Activated CD4-positive, alpha-beta T cell treated with anti-CD3 and anti-CD28 coated beads for 36 hours (primary cell): ENCODE measurements at regions of chr1 and their contacts with region 1.

Region 1: DNA sequence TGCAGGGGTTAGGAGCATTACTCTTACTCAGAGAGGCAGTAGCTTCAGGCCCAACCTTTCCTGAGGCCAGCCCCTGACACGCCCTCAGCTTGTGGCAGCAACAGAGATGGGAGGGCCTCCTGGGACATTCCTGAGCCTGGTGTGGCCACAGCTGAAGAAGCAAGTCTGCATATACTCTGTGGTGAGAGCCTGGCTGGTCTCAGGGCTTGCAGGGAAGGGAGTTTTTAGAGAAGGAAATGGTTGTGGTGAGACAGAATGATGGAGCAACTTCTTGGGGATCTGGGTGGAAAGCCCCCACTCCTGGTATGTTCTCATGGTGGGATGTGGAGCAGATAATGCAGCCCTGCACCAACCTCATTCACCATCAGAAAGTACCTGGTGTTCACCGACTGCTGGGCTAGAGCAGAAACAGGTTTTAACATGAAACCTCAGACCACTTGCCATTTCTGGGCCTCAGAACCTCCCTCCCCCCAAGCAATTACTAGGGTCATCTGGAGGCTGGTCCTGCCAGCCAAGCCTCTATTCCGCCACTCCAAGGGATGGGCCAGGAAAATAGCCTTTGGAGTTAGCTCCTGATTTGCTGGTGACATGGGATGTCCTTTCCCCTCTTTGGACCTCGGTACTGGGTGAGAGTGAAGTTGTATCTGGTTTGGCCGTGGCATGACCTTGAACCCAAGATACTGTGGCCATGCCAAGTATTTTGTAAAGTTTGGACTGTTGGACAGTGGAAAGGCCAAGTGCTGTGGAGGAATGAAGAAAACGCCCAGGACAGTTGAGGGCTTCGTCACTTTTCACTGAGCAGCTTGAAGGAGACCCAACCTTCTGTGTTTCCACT is 28.1 kb upstream of the RNF19B start:
- DNase-seq: peak; percentile 87
- ATAC-seq: peak; percentile 88
- H3K4me3 Mint-ChIP-seq: no peak overlapping the region
- H3K27ac Mint-ChIP-seq: peak overlapping the region; percentile 79
- H3K4me1 Mint-ChIP-seq: peaks cover 43% of the 10 kb centered on the region
- H3K27me3 Mint-ChIP-seq: no peaks in the 10 kb centered on the region

Region 2: GRCh38 chr1:31541194-31541593 is 1451.5 kb before region 1 on chr1:
- CTCF ChIA-PET with region 1: no interaction called
- POLR2A ChIA-PET with region 1: no interaction called
- intact Hi-C with region 1: no loop called
- DNase-seq: no peak
- ATAC-seq: no peak
- H3K4me3 Mint-ChIP-seq: no peak overlapping the region
- H3K27ac Mint-ChIP-seq: no peak overlapping the region
- H3K4me1 Mint-ChIP-seq: peaks cover 2% of the 10 kb centered on the region
- H3K27me3 Mint-ChIP-seq: no peaks in the 10 kb centered on the region

Region 3: DNA sequence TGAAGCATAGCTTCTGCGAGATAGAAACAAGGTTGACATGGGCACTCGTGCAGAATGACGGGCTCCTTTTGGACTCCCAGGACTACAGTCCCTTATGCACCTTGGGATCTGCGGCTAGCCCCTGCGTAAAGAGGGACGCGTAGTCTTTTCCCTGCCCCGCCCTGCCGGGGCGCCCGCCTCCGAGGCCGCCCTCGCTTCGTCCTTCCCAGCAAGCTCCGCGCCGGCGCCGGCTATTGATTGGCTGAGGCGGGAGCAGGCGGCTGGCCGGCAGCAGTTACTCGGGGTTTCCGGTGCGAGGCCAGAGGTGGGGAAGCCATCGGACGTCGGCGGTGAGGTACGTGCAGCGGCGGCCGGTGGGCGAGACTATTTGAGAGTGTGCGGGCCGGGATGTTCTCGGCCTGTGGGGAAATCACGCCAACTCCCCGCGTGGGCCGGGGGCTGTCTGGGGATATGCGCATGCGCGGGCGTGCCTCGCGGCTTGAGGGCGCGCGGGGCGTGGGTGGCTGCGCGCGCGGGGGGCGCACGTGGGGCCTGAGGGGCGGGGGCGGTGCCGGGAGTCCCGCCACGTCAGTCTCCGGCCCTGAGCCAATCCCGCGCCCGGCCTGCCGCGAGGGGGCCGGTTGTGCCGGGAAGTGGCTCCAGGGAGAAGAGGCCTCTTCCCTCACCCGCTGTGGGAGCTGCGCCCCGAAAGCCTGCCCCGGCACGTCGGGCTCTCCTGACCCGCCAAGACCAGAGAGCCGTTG is 813.1 kb before region 1 on chr1 and contains the start of gene TXLNA:
- CTCF ChIA-PET with region 1: no interaction called
- POLR2A ChIA-PET with region 1: no interaction called
- intact Hi-C with region 1: no loop called
- DNase-seq: peak; percentile 96
- ATAC-seq: peak; percentile 93
- H3K4me3 Mint-ChIP-seq: peak within 1 kb of the TSS; percentile 86
- H3K27ac Mint-ChIP-seq: peak within 1 kb of the TSS; percentile 98
- H3K4me1 Mint-ChIP-seq: peaks cover 44% of the 10 kb centered on the region
- H3K27me3 Mint-ChIP-seq: no peaks in the 10 kb centered on the region
- total RNA-seq, gene TXLNA: 79.5 to 79.7 TPM

Region 4: DNA sequence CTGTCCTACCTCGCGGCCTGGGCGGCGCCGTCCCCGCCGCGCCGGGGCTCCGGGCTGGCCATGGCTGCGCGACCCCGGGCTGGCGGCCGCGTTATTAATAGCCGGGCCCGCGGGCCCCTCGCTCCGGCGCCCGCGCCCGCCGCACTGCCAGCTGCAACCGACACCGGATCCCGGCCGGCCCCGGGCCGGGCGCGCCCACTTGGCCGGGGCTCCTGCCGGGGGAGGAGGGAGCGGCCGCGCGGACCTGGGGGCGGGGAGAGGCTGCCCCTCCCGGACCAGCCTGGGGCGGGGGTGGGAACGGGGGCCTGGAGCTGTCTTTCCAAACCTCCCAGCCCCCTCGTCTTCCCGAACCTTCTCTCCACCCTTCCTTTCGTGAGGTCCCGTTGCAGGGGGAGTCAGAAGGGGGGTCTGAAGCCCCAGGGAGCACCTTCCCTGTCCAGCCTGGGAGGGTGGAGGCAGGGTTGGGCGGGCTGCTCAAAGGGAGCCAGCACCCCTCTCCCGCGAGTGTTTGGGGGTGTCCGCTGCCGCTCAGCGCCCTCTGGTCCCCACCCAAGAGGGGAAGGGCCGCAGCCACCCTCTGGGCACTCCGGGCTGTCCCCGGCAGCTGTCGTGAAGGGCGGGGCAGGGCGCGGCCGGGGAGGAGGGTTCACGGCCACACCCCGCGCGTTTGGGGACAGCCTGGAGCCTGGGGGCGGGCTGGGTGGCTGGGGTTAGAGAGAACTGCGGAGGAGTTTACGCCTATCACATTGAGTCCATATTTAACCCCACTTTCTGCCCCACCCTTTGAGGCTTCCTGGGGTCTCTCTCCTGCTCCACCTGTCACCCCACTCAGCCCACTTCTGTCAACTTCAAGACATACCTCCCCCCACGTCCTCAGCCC is 289.9 kb before region 1 on chr1 and contains the start of gene SYNC:
- CTCF ChIA-PET with region 1: no interaction called
- POLR2A ChIA-PET with region 1: no interaction called
- intact Hi-C with region 1: no loop called
- DNase-seq: peak; percentile 40
- ATAC-seq: peak; percentile 55
- H3K4me3 Mint-ChIP-seq: peak within 1 kb of the TSS; percentile 15
- H3K27ac Mint-ChIP-seq: no peak within 1 kb of the TSS
- H3K4me1 Mint-ChIP-seq: peaks cover 9% of the 10 kb centered on the region
- H3K27me3 Mint-ChIP-seq: peaks cover 27% of the 10 kb centered on the region
- total RNA-seq, gene SYNC: not detected

Region 5: GRCh38 chr1:32939655-32940371 is 52.9 kb before region 1 on chr1:
- CTCF ChIA-PET with region 1: interaction called, 3 read pairs
- POLR2A ChIA-PET with region 1: no interaction called
- intact Hi-C with region 1: loop called (anchors 1 to 5 kb)
- DNase-seq: peak; percentile 54
- ATAC-seq: peak; percentile 73
- H3K4me3 Mint-ChIP-seq: no peak overlapping the region
- H3K27ac Mint-ChIP-seq: peak overlapping the region; percentile 45
- H3K4me1 Mint-ChIP-seq: peaks cover 29% of the 10 kb centered on the region
- H3K27me3 Mint-ChIP-seq: no peaks in the 10 kb centered on the region

Region 6: GRCh38 chr1:32948905-32949304 is 43.8 kb before region 1 on chr1:
- CTCF ChIA-PET with region 1: interaction called, 3 read pairs
- POLR2A ChIA-PET with region 1: no interaction called
- intact Hi-C with region 1: loop called in 1 of 2 experiments (anchors 5 kb)
- DNase-seq: no peak
- ATAC-seq: no peak
- H3K4me3 Mint-ChIP-seq: no peak overlapping the region
- H3K27ac Mint-ChIP-seq: peak overlapping the region; percentile 5
- H3K4me1 Mint-ChIP-seq: peaks cover 7% of the 10 kb centered on the region
- H3K27me3 Mint-ChIP-seq: no peaks in the 10 kb centered on the region

Region 7: GRCh38 chr1:32981003-32981901 is 11.5 kb before region 1 on chr1:
- CTCF ChIA-PET with region 1: interaction called, 5 read pairs
- POLR2A ChIA-PET with region 1: interaction called, 5 read pairs
- intact Hi-C with region 1: loop called in 1 of 2 experiments (anchors 1 kb)
- DNase-seq: peak; percentile 78
- ATAC-seq: peak; percentile 94
- H3K4me3 Mint-ChIP-seq: peak overlapping the region; percentile 37
- H3K27ac Mint-ChIP-seq: peak overlapping the region; percentile 84
- H3K4me1 Mint-ChIP-seq: peaks cover 58% of the 10 kb centered on the region
- H3K27me3 Mint-ChIP-seq: no peaks in the 10 kb centered on the region